HepG2 (cell line): ENCODE measurements at regions of chr16 and their contacts with region 1.

Region 1: DNA sequence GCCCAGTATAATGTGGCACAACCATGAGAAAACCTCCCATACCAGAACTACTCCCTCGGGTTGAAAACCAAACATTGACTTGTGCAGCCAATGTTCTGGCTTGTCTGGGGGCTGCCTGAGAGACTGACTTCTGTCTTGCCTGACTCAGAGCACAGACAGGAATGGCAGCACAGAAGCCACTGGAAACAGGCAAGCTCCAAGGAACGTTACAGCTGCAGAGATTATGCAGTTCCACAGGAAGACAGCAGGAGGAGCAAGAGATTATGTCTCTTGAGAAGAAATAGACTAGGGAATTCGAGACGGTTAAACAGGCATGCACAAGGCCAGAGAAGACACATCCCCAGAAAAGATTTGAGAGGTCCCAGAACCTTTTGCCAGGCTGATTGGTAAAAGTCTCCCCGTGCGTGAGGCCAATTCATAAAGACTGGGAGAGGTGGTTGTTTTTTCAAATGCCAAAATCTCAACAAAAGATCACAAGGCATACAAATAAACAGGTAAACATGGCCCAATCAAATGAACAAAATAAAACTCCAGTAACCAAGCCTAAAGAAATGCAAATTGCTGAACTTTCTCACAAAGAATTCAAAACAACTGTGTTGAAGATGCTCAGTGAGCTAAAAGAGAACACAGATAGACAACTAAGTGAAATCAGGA is 90.6 kb upstream of the CDH5 start:
- DNase-seq: peak; percentile 61
- ATAC-seq: peak; percentile 68
- H3K4me3 ChIP-seq: no peak overlapping the region
- H3K27ac ChIP-seq: no peak overlapping the region
- H3K4me1 ChIP-seq: no peaks in the 10 kb centered on the region
- H3K27me3 ChIP-seq: peaks cover 2 to 19% of the 10 kb centered on the region in 2 experiments; a peak in 4 of 5 replicates
- CTCF ChIP-seq: peak; percentile 77
- EP300 ChIP-seq: no peak
- POLR2A ChIP-seq: no peak
- RAD21 ChIP-seq: no peak

Region 2: GRCh38 chr16:66223176-66223780 is 52.6 kb before region 1 on chr16:
- CTCF ChIA-PET with region 1: no interaction called
- POLR2A ChIA-PET with region 1: no interaction called
- in situ Hi-C with region 1: no loop called
- intact Hi-C with region 1: no loop called
- DNase-seq: no peak
- ATAC-seq: no peak
- H3K4me3 ChIP-seq: no peak overlapping the region
- H3K27ac ChIP-seq: no peak overlapping the region
- H3K4me1 ChIP-seq: no peaks in the 10 kb centered on the region
- H3K27me3 ChIP-seq: peaks cover 2 to 40% of the 10 kb centered on the region in 2 experiments; a peak in 4 of 5 replicates
- CTCF ChIP-seq: no peak
- EP300 ChIP-seq: no peak
- POLR2A ChIP-seq: no peak
- RAD21 ChIP-seq: no peak

Region 3: DNA sequence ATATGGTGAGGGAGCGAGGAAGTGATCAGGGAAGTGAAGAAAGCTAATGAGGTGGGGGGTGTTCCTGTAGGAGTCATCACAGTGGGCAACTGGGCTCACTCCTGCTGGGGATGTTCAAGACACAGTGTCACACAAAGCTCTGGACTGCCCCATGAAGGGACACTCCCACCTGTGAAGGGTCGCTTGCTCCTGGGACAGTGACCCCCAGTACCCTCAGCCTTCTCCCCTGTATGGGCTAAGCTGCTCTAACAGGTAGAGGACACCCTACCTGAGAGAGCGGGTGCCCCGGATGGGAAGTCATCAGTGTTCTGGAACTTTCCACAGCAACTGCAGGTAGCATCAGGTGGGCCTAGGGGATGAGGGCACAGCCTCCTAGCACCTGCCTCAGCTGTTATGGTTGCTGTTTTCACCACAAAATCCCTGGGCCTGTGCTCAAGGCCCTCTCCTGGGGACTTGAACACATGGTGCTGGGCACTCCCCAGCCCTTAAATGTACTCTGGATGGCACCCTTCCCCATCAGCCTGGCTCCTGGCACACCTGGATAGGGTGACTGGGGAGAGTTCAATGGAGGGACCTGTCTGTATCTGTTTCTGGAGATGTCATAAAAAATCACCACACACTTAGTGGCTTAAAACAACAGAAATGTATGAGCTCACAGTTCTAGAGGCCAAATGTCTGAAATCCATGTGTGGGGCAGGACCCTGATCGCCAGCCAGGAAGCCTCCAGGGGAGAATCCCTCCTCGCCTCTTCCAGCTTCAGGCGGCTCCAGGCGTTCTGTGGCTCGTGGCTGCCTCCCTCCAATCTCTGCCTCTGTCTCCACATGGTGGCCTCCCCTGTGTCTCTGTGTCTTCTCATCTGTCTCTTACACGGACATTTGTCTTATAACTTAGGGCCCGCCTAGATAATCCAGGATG is 13.4 kb before region 1 on chr16:
- CTCF ChIA-PET with region 1: no interaction called
- POLR2A ChIA-PET with region 1: no interaction called
- in situ Hi-C with region 1: no loop called
- intact Hi-C with region 1: no loop called
- DNase-seq: no peak
- ATAC-seq: no peak
- H3K4me3 ChIP-seq: no peak overlapping the region
- H3K27ac ChIP-seq: no peak overlapping the region
- H3K4me1 ChIP-seq: no peaks in the 10 kb centered on the region
- H3K27me3 ChIP-seq: peaks cover 7 to 44% of the 10 kb centered on the region in 2 experiments; a peak in 3 of 5 replicates
- CTCF ChIP-seq: no peak
- EP300 ChIP-seq: no peak
- POLR2A ChIP-seq: no peak
- RAD21 ChIP-seq: no peak

Region 4: DNA sequence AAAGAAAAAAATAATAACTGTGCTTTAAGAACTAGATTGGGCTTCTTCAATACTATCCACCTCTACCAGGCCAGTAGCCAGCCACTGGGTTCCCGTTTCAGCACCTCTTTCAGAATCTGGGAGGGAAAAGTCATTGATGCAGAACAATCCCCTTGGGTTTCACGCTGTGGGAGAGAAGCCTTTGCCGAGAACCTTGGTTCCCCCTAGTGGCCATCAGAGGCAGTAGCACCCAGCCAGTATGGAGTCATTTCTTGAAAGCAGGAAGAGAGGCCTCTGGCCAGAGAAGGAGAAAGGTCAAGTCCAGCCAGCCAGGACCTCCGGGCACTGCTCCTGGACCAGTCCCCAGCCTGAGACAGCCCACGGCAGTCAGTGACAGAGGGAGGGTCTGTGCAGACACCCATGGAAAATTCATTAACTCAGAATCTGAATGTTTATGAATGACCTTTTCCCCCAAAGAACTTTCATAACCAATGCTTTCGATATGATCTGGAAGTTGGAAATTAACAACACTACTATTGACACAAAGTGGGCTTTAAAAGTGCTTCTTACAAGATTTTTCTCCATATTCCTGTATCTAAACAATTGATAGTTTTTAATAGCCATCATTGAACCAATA is 39.4 kb after region 1 on chr16:
- CTCF ChIA-PET with region 1: interaction called, 21 read pairs
- POLR2A ChIA-PET with region 1: no interaction called
- in situ Hi-C with region 1: no loop called
- intact Hi-C with region 1: loop called (anchors 1 kb)
- DNase-seq: peak; percentile 69
- ATAC-seq: peak; percentile 97
- H3K4me3 ChIP-seq: no peak overlapping the region
- H3K27ac ChIP-seq: no peak overlapping the region
- H3K4me1 ChIP-seq: no peaks in the 10 kb centered on the region
- H3K27me3 ChIP-seq: peaks cover 0 to 44% of the 10 kb centered on the region in 2 experiments; a peak in 3 of 5 replicates
- CTCF ChIP-seq: peak; percentile 90
- EP300 ChIP-seq: no peak
- POLR2A ChIP-seq: no peak
- RAD21 ChIP-seq: peak; percentile 54; the same call in 1 of the 2 replicates